WTC11 (cell line): ENCODE measurements at regions of chr10 and their contacts with region 1.

Region 1: DNA sequence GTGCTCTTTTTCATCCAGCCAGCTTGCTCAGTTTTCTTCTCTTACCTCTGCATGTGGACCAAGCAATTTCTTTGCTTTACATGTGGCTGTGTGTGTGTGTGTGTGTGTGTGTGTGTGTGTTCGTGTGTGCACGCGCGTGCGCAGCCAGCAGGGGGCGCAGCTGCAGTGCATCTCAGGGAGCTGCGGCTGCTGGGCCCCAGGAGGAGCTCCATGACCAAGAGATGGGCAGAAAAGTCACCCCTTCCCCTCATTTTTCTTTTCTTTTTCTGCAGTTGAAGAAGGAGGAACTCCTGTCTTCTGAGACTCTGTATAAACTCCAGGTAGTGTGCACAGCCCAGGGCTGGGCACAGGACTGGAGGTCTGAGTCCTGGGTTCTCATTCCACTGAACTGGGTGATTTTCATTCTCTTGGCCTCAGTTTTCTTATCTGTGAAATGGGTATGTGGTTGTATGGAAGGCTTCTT is 41.8 kb downstream of the BLNK start:
- DNase-seq: peak; percentile 88
- ATAC-seq: peak; percentile 71
- H3K4me3 Mint-ChIP-seq: no peak overlapping the region
- H3K27ac Mint-ChIP-seq: no peak overlapping the region
- H3K4me1 Mint-ChIP-seq: peaks cover 12% of the 10 kb centered on the region
- H3K27me3 Mint-ChIP-seq: no peaks in the 10 kb centered on the region; the same call in 1 of the 2 replicates
- CTCF ChIP-seq: peak; percentile 77; the same call in 1 of the 2 replicates

Region 2: GRCh38 chr10:96017191-96017687 is 212.4 kb before region 1 on chr10:
- CTCF ChIA-PET with region 1: interaction called, 26 read pairs
- POLR2A ChIA-PET with region 1: no interaction called
- DNase-seq: peak; percentile 29
- ATAC-seq: peak; percentile 94
- H3K4me3 Mint-ChIP-seq: no peak overlapping the region
- H3K27ac Mint-ChIP-seq: no peak overlapping the region
- H3K4me1 Mint-ChIP-seq: no peaks in the 10 kb centered on the region
- H3K27me3 Mint-ChIP-seq: no peaks in the 10 kb centered on the region
- CTCF ChIP-seq: peak; percentile 53; the same call in 1 of the 2 replicates

Region 3: GRCh38 chr10:96082153-96082552 is 147.4 kb before region 1 on chr10:
- CTCF ChIA-PET with region 1: no interaction called
- POLR2A ChIA-PET with region 1: no interaction called
- DNase-seq: no peak
- ATAC-seq: no peak
- H3K4me3 Mint-ChIP-seq: no peak overlapping the region
- H3K27ac Mint-ChIP-seq: no peak overlapping the region
- H3K4me1 Mint-ChIP-seq: peaks cover 6% of the 10 kb centered on the region
- H3K27me3 Mint-ChIP-seq: peaks cover 3% of the 10 kb centered on the region; the same call in 1 of the 2 replicates
- CTCF ChIP-seq: no peak

Region 4: DNA sequence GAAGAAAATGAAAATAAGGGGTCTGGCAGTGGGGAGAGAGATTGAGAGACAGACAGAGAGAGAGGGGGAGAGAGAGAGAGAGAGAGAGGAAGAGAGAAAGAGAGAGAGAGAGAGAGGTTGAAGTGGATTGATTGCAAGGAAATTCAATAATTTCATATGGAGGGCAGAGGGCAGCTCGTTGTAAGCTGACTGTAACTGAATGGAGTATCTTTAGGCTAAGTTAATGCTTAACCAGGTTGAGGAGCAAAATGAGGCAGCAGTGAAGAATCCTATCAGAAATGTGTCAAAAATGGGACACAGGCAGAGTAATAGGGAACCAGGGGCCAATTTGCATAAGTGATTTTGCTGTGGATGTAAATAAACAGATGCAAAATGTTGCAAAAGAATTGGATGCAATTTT is 20.8 kb after region 1 on chr10:
- CTCF ChIA-PET with region 1: interaction called, 12 read pairs
- POLR2A ChIA-PET with region 1: no interaction called
- DNase-seq: no peak
- ATAC-seq: no peak
- H3K4me3 Mint-ChIP-seq: no peak overlapping the region
- H3K27ac Mint-ChIP-seq: no peak overlapping the region
- H3K4me1 Mint-ChIP-seq: peaks cover 21% of the 10 kb centered on the region
- H3K27me3 Mint-ChIP-seq: no peaks in the 10 kb centered on the region
- CTCF ChIP-seq: no peak

Region 5: DNA sequence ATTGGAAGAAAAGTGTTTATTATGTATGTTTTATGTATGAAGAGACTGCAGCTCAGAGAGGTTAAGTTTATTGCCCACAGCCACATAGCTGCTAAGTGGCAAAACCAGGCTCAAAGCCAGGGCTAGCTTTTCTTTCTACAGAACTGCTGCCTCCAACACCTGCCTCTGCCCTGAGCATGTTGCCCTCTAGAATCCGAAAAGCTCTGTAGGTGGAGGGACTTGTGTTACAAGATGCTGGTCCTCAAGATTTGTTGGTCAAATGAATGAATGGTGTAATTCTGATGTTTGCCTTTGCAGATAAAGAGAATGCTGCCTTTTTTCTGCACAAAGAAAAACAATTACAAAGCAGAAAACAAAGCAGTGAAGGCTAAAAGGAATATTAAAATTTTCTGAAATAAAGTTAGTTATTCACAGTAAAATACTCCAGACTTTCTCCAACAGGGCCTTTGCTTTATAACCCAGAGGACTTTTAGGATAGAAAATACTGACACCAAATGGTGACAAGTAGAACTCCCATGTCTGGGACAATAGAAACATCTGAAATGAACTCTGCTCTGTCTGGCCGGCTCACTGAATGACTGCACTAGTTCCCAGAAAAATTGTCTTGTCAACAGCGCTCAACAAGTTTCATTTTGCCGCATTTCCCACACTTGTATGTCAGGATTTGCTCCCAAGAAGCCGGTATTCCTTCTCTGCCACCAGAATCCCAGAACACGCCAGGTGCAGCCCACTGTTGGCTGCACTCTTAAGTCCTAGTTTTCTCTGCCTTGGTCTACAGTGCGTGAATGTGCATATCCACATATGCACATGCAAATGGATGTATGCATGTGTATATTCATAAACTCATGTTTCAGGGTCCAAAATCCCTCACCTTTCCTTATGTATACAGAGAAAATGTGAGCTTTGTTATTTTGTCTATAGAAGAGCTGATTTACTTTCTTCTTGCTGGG is 63.6 kb after region 1 on chr10:
- CTCF ChIA-PET with region 1: interaction called, 110 read pairs
- POLR2A ChIA-PET with region 1: no interaction called
- DNase-seq: no peak
- ATAC-seq: peak; percentile 98
- H3K4me3 Mint-ChIP-seq: no peak overlapping the region
- H3K27ac Mint-ChIP-seq: no peak overlapping the region
- H3K4me1 Mint-ChIP-seq: peaks cover 13% of the 10 kb centered on the region
- H3K27me3 Mint-ChIP-seq: no peaks in the 10 kb centered on the region
- CTCF ChIP-seq: no peak

Region 6: DNA sequence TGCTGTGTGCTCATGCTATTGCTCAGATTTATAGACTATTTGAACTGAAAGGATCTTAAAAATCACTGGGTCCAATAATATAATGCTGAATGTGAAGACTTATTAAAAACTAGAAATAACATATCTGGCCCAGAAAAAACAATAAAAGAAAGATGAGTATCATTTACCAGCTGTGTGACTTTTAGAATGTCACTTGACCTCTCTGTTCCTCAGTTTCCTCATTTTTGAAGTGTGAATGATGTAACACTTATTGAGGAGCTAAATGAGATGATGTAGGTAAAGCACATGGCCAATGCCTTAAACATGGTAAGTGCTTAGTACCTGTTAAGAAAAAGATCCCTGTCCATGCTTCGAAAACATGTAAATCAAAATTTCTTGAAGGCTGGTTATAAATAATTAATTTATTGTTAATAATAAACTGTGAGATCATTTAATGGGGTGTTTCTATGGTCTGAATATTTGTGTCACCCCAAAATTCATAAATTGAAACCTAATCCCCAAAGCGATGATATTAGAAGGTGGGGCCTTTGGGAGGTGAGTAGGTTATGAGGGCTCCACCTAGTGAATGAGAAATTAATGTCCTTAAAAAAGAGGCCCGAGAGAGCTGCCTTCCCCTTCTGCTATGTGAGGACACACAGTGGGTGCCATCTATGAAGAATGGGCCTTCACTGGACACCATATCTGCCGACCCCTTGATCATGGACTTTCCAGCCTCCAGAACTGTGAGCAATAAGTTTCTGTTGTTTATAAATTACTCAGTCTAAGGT is 87.7 kb after region 1 on chr10:
- CTCF ChIA-PET with region 1: interaction called, 62 read pairs
- POLR2A ChIA-PET with region 1: no interaction called
- DNase-seq: no peak
- ATAC-seq: no peak
- H3K4me3 Mint-ChIP-seq: no peak overlapping the region
- H3K27ac Mint-ChIP-seq: no peak overlapping the region
- H3K4me1 Mint-ChIP-seq: peaks cover 51% of the 10 kb centered on the region
- H3K27me3 Mint-ChIP-seq: no peaks in the 10 kb centered on the region
- CTCF ChIP-seq: no peak

Region 7: GRCh38 chr10:96339957-96340904 is 110.6 kb after region 1 on chr10:
- CTCF ChIA-PET with region 1: interaction called, 35 read pairs
- POLR2A ChIA-PET with region 1: no interaction called
- DNase-seq: peak; percentile 79
- ATAC-seq: peak; percentile 72
- H3K4me3 Mint-ChIP-seq: no peak overlapping the region
- H3K27ac Mint-ChIP-seq: no peak overlapping the region
- H3K4me1 Mint-ChIP-seq: peaks cover 59% of the 10 kb centered on the region
- H3K27me3 Mint-ChIP-seq: peaks cover 24% of the 10 kb centered on the region
- CTCF ChIP-seq: peak; percentile 71